Spleen (tissue), 13 donors: ENCODE measurements at regions of chr18 and their contacts with region 1.

Region 1: GRCh38 chr18:21914739-21915319 is 174.2 kb downstream of the MIB1 start:
- DNase-seq: no peak
- H3K4me3 ChIP-seq: no peak overlapping the region
- H3K27ac ChIP-seq: no peak overlapping the region
- H3K4me1 ChIP-seq: no peaks in the 10 kb centered on the region
- H3K27me3 ChIP-seq: no peaks in the 10 kb centered on the region
- CTCF ChIP-seq: peak in 9 of 11 experiments; percentile 11 to 71 (median 42)
- POLR2A ChIP-seq: no peak

Region 2: DNA sequence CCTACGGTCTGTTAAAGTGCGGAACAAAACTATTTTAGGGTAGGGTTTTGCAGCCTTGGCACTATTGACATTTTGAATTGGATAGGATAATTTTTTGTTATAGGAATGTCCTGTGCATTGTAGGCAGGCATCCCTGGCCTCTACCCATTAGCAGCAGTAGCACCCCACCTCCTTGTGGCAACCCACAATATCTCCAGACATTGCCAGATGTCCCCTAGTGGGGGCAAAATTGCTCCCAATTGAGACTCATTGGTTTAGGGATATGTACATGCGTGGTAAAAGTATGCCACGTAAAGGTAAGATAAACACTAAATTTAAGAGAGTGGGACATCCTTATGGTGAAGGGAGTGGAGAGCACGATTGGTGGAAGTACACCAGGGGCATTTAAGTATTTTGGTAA is 169.6 kb before region 1 on chr18:
- intact Hi-C with region 1: no loop called
- DNase-seq: no peak
- H3K4me3 ChIP-seq: no peak overlapping the region
- H3K27ac ChIP-seq: no peak overlapping the region
- H3K4me1 ChIP-seq: peaks cover under 1 to 77% (median 39%) of the 10 kb centered on the region in 6 donors
- H3K27me3 ChIP-seq: no peaks in the 10 kb centered on the region
- CTCF ChIP-seq: no peak
- POLR2A ChIP-seq: no peak

Region 3: GRCh38 chr18:22185273-22185672 is 270.4 kb after region 1 on chr18:
- intact Hi-C with region 1: loop called (anchors 10 kb)
- DNase-seq: no peak
- H3K4me3 ChIP-seq: peak overlapping the region in 1 of 8 donors; percentile 12
- H3K27ac ChIP-seq: peak overlapping the region in 4 of 8 donors; percentile 16 to 66 (median 38)
- H3K4me1 ChIP-seq: peaks cover 0 to 79% (median 15%) of the 10 kb centered on the region in 6 donors
- H3K27me3 ChIP-seq: peaks cover 0 to 32% (median 0%) of the 10 kb centered on the region in 7 donors
- CTCF ChIP-seq: peak in 1 of 11 experiments; percentile 12
- POLR2A ChIP-seq: no peak